Activated naive CD4-positive, alpha-beta T cell treated with anti-CD3 and anti-CD28 coated beads for 36 hours (primary cell): ENCODE measurements at regions of chr1 and their contacts with region 1.

Region 1: GRCh38 chr1:205658943-205659581 is 21.2 kb downstream of the SLC45A3 start:
- DNase-seq: peak; percentile 84
- H3K4me3 Mint-ChIP-seq: no peak overlapping the region
- H3K27ac Mint-ChIP-seq: no peak overlapping the region
- H3K4me1 Mint-ChIP-seq: peaks cover 2% of the 10 kb centered on the region
- H3K27me3 Mint-ChIP-seq: peaks cover 3% of the 10 kb centered on the region

Region 2: GRCh38 chr1:205042911-205043806 is 615.9 kb before region 1 on chr1 and contains the start of gene CNTN2:
- CTCF ChIA-PET with region 1: no interaction called
- intact Hi-C with region 1: no loop called
- DNase-seq: no peak
- H3K4me3 Mint-ChIP-seq: no peak within 1 kb of the TSS
- H3K27ac Mint-ChIP-seq: no peak within 1 kb of the TSS
- H3K4me1 Mint-ChIP-seq: no peaks in the 10 kb centered on the region
- H3K27me3 Mint-ChIP-seq: peaks cover 58% of the 10 kb centered on the region
- total RNA-seq, gene CNTN2: not detected

Region 3: GRCh38 chr1:205543411-205544301 is 115.4 kb before region 1 on chr1:
- CTCF ChIA-PET with region 1: interaction called, 12 read pairs
- intact Hi-C with region 1: no loop called
- DNase-seq: peak; percentile 61
- H3K4me3 Mint-ChIP-seq: peak overlapping the region; percentile 36
- H3K27ac Mint-ChIP-seq: no peak overlapping the region
- H3K4me1 Mint-ChIP-seq: peaks cover 11% of the 10 kb centered on the region
- H3K27me3 Mint-ChIP-seq: peaks cover 23% of the 10 kb centered on the region

Region 4: GRCh38 chr1:205591522-205592351 is 67.3 kb before region 1 on chr1:
- CTCF ChIA-PET with region 1: interaction called, 390 read pairs
- intact Hi-C with region 1: loop called (anchors 1 kb)
- DNase-seq: peak; percentile 96
- H3K4me3 Mint-ChIP-seq: peak overlapping the region; percentile 88
- H3K27ac Mint-ChIP-seq: peak overlapping the region; percentile 90
- H3K4me1 Mint-ChIP-seq: peaks cover 48% of the 10 kb centered on the region
- H3K27me3 Mint-ChIP-seq: no peaks in the 10 kb centered on the region

Region 5: DNA sequence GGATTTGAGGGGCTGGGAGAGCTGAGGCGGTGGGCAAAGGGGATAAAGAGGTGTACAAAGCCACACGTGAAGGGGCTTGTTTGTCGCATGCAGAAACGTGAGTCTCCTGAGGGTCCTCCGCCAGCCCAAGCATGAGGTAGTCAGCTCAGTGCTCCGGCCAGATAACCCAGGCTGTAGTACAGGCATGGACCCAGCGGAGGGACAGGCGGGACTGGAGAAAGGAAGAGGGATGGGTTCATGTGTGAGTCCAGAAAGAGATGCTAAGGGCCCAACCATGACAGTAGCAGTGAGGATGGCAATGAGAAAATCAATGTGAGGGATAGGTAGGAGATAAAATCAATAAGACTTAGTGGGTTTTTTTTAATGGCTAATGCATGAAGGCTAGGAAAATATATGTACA is 13.5 kb before region 1 on chr1:
- CTCF ChIA-PET with region 1: interaction called, 58 read pairs
- intact Hi-C with region 1: no loop called
- DNase-seq: no peak
- H3K4me3 Mint-ChIP-seq: no peak overlapping the region
- H3K27ac Mint-ChIP-seq: no peak overlapping the region
- H3K4me1 Mint-ChIP-seq: no peaks in the 10 kb centered on the region
- H3K27me3 Mint-ChIP-seq: no peaks in the 10 kb centered on the region

Region 6: DNA sequence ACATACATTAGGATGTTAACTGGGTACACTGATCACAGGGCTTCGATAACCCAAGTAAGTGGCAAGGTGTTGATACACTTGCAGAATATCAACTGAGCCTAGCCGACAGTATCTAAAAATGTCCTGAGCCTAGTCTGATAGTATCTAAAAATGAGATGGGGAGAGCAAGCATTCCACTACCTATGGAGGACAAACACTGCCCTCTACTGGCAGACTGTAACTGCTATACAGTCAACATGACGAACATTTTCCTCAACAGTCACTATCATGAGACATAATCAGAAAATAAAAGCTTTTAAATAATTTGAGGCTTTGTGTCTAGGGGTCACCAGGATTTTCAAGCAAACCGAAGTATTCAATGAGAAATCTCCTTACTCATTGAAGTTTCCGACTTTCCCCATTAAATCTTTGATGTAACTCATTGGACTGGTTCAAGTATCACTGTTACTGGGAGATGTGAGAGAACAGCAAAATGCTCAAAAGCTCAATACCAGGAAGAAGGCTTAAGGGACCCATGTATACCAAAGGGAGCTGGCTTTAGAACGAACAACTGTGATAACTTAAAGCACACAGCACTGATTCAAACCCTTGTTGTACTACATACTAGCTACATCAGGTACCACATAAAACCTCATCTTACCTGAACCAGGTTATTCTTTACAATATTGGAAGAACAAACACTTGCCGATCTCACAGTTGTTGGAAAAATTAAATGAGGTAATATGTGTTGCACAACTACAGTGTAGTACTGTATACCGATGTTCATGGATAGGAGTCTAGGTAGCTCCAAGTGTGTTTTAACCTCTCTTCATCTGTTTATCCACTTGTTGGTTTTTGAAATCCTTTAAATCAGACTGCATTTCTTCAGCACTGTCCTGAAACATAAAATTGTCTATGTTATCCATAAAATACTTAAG is 52.3 kb after region 1 on chr1:
- CTCF ChIA-PET with region 1: interaction called, 243 read pairs
- intact Hi-C with region 1: loop called (anchors 1 kb)
- DNase-seq: peak; percentile 85
- H3K4me3 Mint-ChIP-seq: no peak overlapping the region
- H3K27ac Mint-ChIP-seq: peak overlapping the region; percentile 56
- H3K4me1 Mint-ChIP-seq: peaks cover 22% of the 10 kb centered on the region
- H3K27me3 Mint-ChIP-seq: no peaks in the 10 kb centered on the region

Region 7: DNA sequence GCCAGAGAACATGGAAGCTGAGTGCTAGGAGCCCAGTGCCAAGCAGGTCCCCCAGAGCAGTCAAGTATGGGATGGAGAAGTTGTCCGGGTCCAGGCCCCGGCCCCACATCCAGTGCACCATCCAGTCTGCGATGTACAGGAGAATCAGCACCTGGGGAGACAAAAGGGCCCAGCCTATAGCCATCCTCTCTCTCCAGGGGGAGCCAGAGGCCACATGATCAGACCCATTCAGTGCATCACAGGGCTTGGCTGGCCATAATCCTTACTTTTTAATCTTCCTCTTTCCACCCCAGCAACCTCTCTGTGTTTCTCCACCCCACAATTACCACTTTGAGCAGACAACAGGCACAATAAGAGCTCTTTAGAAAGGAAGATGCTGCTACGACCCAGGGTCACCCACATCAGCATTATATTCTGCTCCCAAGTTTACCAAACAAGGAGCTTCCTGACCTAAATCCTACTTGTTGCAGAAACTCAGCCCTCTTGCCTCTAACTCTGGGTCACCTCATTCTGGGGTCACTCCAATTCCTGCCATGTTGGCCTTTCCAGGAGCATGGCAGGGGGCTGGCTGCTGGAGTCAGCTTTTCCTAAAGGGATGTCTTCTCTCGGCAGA is 132.6 kb after region 1 on chr1:
- CTCF ChIA-PET with region 1: interaction called, 18 read pairs
- intact Hi-C with region 1: no loop called
- DNase-seq: peak; percentile 80
- H3K4me3 Mint-ChIP-seq: no peak overlapping the region
- H3K27ac Mint-ChIP-seq: no peak overlapping the region
- H3K4me1 Mint-ChIP-seq: no peaks in the 10 kb centered on the region
- H3K27me3 Mint-ChIP-seq: no peaks in the 10 kb centered on the region

Region 8: GRCh38 chr1:205939690-205940330 is 280.7 kb after region 1 on chr1:
- CTCF ChIA-PET with region 1: no interaction called
- intact Hi-C with region 1: no loop called
- DNase-seq: no peak
- H3K4me3 Mint-ChIP-seq: no peak overlapping the region
- H3K27ac Mint-ChIP-seq: no peak overlapping the region
- H3K4me1 Mint-ChIP-seq: no peaks in the 10 kb centered on the region
- H3K27me3 Mint-ChIP-seq: peaks cover 39% of the 10 kb centered on the region

Region 9: GRCh38 chr1:206106328-206107167 is 447.5 kb after region 1 on chr1:
- CTCF ChIA-PET with region 1: interaction called, 3 read pairs
- intact Hi-C with region 1: loop called (anchors 2 kb)
- DNase-seq: peak; percentile 92
- H3K4me3 Mint-ChIP-seq: no peak overlapping the region
- H3K27ac Mint-ChIP-seq: no peak overlapping the region
- H3K4me1 Mint-ChIP-seq: no peaks in the 10 kb centered on the region
- H3K27me3 Mint-ChIP-seq: peaks cover 2% of the 10 kb centered on the region